Naive thymus-derived CD4-positive, alpha-beta T cell (primary cell): ENCODE measurements at regions of chr1 and their contacts with region 1.

Region 1: GRCh38 chr1:16644193-16644481 is 22.6 kb downstream of the RNU1-3 start:
- DNase-seq: no peak
- ATAC-seq: peak; percentile 43
- H3K4me3 ChIP-seq: peak overlapping the region; percentile 89
- H3K4me3 Mint-ChIP-seq: no peak overlapping the region
- H3K27ac ChIP-seq: peak overlapping the region; percentile 80
- H3K27ac Mint-ChIP-seq: no peak overlapping the region
- H3K4me1 ChIP-seq: peaks cover 21 to 27% of the 10 kb centered on the region in 2 donors
- H3K4me1 Mint-ChIP-seq: peaks cover 0 to 3% (median 0%) of the 10 kb centered on the region in 7 donors
- H3K27me3 ChIP-seq: no peaks in the 10 kb centered on the region
- H3K27me3 Mint-ChIP-seq: peaks cover 0 to 9% (median 0%) of the 10 kb centered on the region in 5 donors

Region 2: DNA sequence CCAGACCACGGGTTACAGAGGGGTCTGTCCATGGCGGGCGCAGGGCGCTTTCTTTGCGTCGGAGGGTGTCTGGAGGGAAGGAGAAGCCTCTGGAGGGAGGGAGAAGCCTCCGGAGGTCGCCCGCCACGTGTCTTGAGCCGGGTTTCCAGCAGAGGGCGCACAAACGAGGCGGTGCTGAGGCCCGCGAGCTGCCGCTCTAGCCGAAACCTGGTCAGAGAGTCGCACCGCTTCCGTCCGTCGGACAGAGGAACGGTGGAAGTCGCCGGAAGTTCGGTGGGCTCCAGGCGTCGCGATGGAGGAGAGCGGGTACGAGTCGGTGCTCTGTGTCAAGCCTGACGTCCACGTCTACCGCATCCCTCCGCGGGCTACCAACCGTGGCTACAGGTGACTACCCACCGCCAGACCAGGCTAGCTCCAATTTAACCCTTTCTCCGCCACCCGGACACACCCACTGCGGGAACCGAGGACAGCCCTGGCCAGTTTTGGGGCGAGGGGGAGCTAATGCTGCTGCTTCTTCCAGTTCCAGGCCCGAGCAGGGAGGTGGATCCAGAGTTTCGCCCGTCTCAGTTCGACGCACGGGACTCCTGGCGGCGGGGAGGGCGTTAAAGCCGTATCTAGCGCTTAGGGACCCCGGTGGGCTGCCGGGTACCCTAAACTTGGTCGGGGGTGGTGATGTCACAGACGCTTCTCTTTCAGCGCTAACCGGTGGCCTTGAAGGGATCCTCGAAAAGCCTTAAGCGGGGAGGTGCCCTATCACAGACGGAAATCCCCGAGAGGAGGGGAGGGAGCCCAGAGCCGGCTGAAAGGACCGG is 203.5 kb before region 1 on chr1 and contains the start of gene NECAP2:
- CTCF ChIA-PET with region 1: no interaction called
- POLR2A ChIA-PET with region 1: no interaction called
- intact Hi-C with region 1: no loop called
- DNase-seq: peak; percentile 79 to 95 (median 88)
- ATAC-seq: peak; percentile 95
- H3K4me3 ChIP-seq: peak within 1 kb of the TSS; percentile 94
- H3K4me3 Mint-ChIP-seq: peak within 1 kb of the TSS; percentile 93 to 100 (median 97)
- H3K27ac ChIP-seq: peak within 1 kb of the TSS; percentile 100
- H3K27ac Mint-ChIP-seq: peak within 1 kb of the TSS; percentile 88 to 98 (median 96)
- H3K4me1 ChIP-seq: peaks cover 17 to 33% of the 10 kb centered on the region in 2 donors
- H3K4me1 Mint-ChIP-seq: peaks cover 19 to 45% (median 34%) of the 10 kb centered on the region in 7 donors
- H3K27me3 ChIP-seq: no peaks in the 10 kb centered on the region
- H3K27me3 Mint-ChIP-seq: no peaks in the 10 kb centered on the region
- total RNA-seq, gene NECAP2: 98.2 to 161 (median 148) TPM

Region 3: GRCh38 chr1:16613185-16614147 is 30.7 kb before region 1 on chr1 and contains the start of gene NBPF1:
- CTCF ChIA-PET with region 1: no interaction called
- POLR2A ChIA-PET with region 1: interaction called, 13 read pairs
- intact Hi-C with region 1: no loop called
- DNase-seq: peak; percentile 79 to 97 (median 87)
- ATAC-seq: peak; percentile 93
- H3K4me3 ChIP-seq: peak within 1 kb of the TSS; percentile 72
- H3K4me3 Mint-ChIP-seq: no peak within 1 kb of the TSS
- H3K27ac ChIP-seq: peak within 1 kb of the TSS; percentile 70
- H3K27ac Mint-ChIP-seq: no peak within 1 kb of the TSS
- H3K4me1 ChIP-seq: peaks cover 15 to 16% of the 10 kb centered on the region in 2 donors
- H3K4me1 Mint-ChIP-seq: no peaks in the 10 kb centered on the region
- H3K27me3 ChIP-seq: no peaks in the 10 kb centered on the region
- H3K27me3 Mint-ChIP-seq: no peaks in the 10 kb centered on the region
- total RNA-seq, gene NBPF1: 7.0 to 25.7 (median 20.7) TPM